CD4-positive, alpha-beta memory T cell (primary cell): ENCODE measurements at regions of chr16 and their contacts with region 1.

Region 1: DNA sequence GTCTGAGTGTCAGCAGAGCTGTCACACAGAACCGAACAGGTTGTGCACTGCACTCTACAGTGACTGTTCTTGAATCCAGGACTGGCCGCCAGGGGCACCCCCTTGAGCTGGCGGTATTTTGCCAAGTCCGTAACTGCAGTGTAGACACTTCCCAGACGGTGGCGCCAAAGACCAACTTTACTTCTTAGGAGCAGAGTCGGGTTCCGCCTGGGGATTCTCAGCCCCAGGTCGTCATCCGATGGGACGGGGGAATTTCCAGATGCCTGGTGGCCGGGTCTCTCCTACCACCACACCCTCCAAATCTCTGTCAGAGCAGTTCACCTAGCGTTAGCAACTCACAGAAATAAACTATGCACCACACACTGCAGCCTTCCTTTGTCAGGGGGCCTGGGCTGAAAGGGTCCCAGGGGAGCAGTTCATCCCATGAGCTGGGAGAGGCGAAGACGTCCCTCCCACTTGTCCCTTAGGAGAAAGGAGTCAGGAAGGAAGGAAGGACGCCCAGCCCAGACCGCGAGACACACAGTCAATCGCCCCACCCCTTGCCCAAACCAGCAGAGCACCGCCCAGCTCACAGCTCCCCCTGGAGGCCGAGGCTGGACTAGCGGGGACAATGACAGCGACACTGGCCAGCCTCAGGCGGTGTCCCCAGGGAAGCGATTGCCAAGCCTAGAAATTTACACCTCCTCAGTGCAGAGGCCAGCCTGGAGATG is 7.4 kb upstream of the RIPOR1 start:
- DNase-seq: peak; percentile 93 to 98 (median 94)
- H3K4me3 ChIP-seq: peak overlapping the region; percentile 72 to 98
- H3K4me3 Mint-ChIP-seq: peak overlapping the region; percentile 89 to 95 (median 91)
- H3K27ac ChIP-seq: peak overlapping the region; percentile 92
- H3K27ac Mint-ChIP-seq: peak overlapping the region; percentile 98 to 100 (median 99)
- H3K4me1 ChIP-seq: peaks cover 5% of the 10 kb centered on the region
- H3K4me1 Mint-ChIP-seq: peaks cover 9 to 26% (median 12%) of the 10 kb centered on the region in 4 donors
- H3K27me3 ChIP-seq: no peaks in the 10 kb centered on the region
- H3K27me3 Mint-ChIP-seq: no peaks in the 10 kb centered on the region

Region 2: DNA sequence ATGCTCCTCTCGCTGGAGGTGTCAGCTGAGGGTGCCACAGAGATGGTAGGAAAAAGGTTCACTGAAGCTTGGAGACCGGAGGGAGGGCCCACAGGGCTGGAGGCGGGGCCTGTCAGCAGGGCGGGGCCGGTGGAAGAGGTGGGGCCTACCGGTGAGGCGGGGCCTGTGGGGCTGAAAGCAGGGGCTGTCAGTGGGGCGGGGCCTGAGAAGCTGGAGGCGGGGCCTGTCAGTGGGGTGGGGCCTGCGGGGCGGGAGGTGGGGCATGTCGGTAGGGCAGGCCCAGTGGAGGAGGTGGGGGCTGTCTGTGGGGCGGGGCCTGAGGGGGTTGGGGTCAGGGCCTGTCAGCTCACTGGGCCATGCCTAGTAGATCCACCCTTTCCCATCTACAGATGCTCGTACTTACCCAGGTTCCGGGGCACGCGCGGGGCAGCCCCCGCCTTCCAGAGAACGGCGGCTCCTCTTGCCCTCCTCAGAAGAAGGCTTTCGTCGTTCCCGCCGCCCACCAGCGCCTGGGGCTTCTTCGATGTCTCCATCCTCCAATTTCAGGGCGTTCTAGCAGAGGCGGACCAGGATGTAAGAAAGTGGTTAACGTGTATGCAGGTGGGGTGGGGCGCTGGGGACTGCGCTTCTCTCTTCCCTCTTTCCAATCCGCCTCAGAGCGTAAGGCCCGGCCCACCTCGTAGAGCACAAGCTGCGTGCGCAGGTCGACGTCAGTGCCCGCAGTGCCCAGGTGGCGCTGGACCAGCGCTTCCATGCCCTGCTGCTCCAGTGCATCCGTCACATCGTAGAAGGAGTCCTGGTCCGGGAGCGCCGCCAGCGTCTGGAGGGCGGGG is 284.5 kb before region 1 on chr16:
- CTCF ChIA-PET with region 1: no interaction called
- POLR2A ChIA-PET with region 1: no interaction called
- intact Hi-C with region 1: no loop called
- DNase-seq: peak; percentile 83 to 87 (median 84)
- H3K4me3 ChIP-seq: peak overlapping the region; percentile 17
- H3K4me3 Mint-ChIP-seq: peak overlapping the region; percentile 71 to 88 (median 81)
- H3K27ac ChIP-seq: peak overlapping the region; percentile 56
- H3K27ac Mint-ChIP-seq: peak overlapping the region; percentile 92 to 99 (median 97)
- H3K4me1 ChIP-seq: peaks cover 13% of the 10 kb centered on the region
- H3K4me1 Mint-ChIP-seq: peaks cover 8 to 26% (median 14%) of the 10 kb centered on the region in 4 donors
- H3K27me3 ChIP-seq: no peaks in the 10 kb centered on the region
- H3K27me3 Mint-ChIP-seq: no peaks in the 10 kb centered on the region

Region 3: GRCh38 chr16:67537270-67537635 is 16.0 kb after region 1 on chr16:
- CTCF ChIA-PET with region 1: interaction called, 125 read pairs
- POLR2A ChIA-PET with region 1: interaction called, 35 read pairs
- intact Hi-C with region 1: loop called (anchors 2 kb)
- DNase-seq: peak in 3 of 5 donors; percentile 37 to 66 (median 38)
- H3K4me3 ChIP-seq: peak overlapping the region; percentile 42 to 72
- H3K4me3 Mint-ChIP-seq: peak overlapping the region; percentile 81 to 92 (median 86)
- H3K27ac ChIP-seq: peak overlapping the region; percentile 84
- H3K27ac Mint-ChIP-seq: peak overlapping the region; percentile 90 to 93 (median 92)
- H3K4me1 ChIP-seq: peaks cover 26% of the 10 kb centered on the region
- H3K4me1 Mint-ChIP-seq: peaks cover 18 to 60% (median 34%) of the 10 kb centered on the region in 4 donors
- H3K27me3 ChIP-seq: no peaks in the 10 kb centered on the region
- H3K27me3 Mint-ChIP-seq: no peaks in the 10 kb centered on the region

Region 4: DNA sequence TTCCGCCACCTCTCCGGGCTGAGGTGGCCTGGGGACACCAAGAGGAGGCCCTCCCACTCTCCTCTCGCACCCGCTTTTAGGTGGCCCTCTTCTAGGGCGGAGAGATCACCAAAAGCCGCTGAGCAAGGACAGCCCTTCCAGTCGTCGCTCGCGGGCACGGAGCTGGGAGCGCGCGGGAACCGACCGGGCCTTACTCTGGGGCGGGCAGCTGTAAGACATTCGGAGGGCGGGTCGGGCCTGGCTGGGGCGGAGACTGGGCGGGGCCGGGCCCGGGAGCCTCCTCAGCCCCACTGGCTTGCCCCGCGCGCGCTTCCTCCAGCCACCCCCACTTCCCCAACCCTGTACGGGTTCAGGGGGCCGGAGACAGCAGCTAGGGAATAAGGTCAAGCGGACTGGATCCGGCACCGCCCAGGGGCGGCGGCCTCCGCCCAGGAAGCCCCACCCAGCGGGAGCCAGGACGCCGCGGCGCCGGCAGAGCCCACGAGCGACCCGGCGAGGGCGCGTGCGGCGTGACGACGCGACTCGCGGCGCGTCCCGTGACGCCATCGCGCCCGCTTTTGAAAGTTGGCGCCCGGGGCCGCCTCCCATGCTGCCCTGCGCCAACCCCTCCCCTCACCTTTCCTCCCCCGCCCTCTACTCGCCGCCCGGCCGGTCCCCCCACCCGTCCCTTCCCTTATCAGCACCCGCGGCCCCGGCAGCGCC is 40.7 kb after region 1 on chr16:
- CTCF ChIA-PET with region 1: interaction called, 26 read pairs
- POLR2A ChIA-PET with region 1: interaction called, 19 read pairs
- intact Hi-C with region 1: loop called (anchors 2 kb)
- DNase-seq: peak; percentile 96 to 98 (median 97)
- H3K4me3 ChIP-seq: peak overlapping the region; percentile 61 to 78
- H3K4me3 Mint-ChIP-seq: peak overlapping the region; percentile 89 to 97 (median 91)
- H3K27ac ChIP-seq: peak overlapping the region; percentile 73
- H3K27ac Mint-ChIP-seq: peak overlapping the region; percentile 92 to 97 (median 96)
- H3K4me1 ChIP-seq: peaks cover 52% of the 10 kb centered on the region
- H3K4me1 Mint-ChIP-seq: peaks cover 23 to 53% (median 37%) of the 10 kb centered on the region in 4 donors
- H3K27me3 ChIP-seq: no peaks in the 10 kb centered on the region
- H3K27me3 Mint-ChIP-seq: no peaks in the 10 kb centered on the region

Region 5: DNA sequence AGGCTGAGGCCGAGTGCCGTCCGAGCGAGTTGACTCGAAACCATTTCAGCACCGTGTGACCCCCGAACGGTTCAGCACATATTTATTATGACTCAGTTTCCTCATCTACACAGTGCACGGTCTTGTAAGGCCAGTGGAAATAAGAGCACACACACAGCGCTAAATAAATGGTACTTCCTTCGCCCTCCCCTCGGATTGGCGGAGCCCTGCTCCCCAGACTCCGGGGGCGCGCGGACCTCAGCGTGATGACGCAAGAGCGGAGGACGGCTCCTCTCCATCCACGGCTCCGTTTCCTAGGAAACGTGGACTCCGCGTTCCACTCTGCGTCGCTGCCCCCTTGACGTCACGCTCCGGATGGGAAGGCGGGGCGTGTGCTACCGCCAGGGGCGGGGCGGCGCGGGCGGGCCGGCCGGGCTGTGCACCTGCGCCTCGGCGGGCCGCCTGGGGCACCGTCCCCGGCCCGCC is 139.3 kb after region 1 on chr16 and contains the start of gene PARD6A:
- CTCF ChIA-PET with region 1: interaction called, 143 read pairs
- POLR2A ChIA-PET with region 1: interaction called, 15 read pairs
- intact Hi-C with region 1: no loop called
- DNase-seq: peak; percentile 94 to 97 (median 96)
- H3K4me3 ChIP-seq: peak within 1 kb of the TSS; percentile 98 to 100
- H3K4me3 Mint-ChIP-seq: peak within 1 kb of the TSS; percentile 93 to 98 (median 95)
- H3K27ac ChIP-seq: peak within 1 kb of the TSS; percentile 98
- H3K27ac Mint-ChIP-seq: peak within 1 kb of the TSS; percentile 97 to 99 (median 98)
- H3K4me1 ChIP-seq: peaks cover 27% of the 10 kb centered on the region
- H3K4me1 Mint-ChIP-seq: peaks cover 10 to 48% (median 20%) of the 10 kb centered on the region in 4 donors
- H3K27me3 ChIP-seq: no peaks in the 10 kb centered on the region
- H3K27me3 Mint-ChIP-seq: no peaks in the 10 kb centered on the region
- total RNA-seq, gene PARD6A: 7.4 to 8.8 TPM

Region 6: DNA sequence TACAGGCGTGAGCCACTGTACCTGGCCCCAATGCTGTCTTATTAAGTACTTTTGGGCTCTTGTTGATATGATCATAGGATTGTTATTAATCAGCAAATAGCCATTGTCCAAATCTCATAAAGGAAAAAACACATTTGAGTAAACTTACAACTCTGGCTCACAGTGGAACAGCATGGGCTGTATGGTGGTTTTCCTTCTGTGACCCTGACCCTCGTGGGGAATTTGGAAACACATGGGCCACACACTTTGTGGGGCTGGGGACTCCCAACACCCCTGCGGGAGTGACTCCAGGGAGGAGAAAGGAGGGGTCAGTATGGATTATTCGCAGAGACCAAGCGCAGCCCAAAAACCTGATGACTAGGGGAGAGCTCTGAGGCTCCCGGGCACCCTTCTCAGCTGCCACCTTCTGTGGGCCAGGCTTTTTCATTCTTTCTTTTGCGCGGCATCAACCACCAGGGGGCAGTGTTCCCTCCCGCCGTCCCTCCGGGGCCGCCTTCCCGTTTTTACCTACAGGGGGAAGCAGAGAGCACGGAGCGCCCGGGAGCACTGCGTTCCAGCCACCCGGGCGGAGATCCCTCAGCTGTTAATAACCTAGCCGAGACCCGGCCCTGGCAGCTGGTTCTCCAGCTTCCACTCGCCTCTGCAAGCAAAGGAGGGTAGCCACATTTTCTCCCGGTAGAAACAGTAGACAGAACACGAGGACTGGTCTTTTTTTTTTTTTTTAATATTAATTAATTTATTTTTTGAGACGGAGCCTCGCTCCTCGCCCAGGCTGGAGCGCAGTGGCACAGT is 295.2 kb after region 1 on chr16:
- CTCF ChIA-PET with region 1: interaction called, 13 read pairs
- POLR2A ChIA-PET with region 1: no interaction called
- intact Hi-C with region 1: loop called (anchors 2 kb)
- DNase-seq: peak; percentile 83 to 92 (median 85)
- H3K4me3 ChIP-seq: no peak overlapping the region
- H3K4me3 Mint-ChIP-seq: peak overlapping the region in 1 of 8 donors; percentile 61
- H3K27ac ChIP-seq: no peak overlapping the region
- H3K27ac Mint-ChIP-seq: peak overlapping the region in 4 of 7 donors; percentile 75 to 92 (median 82)
- H3K4me1 ChIP-seq: no peaks in the 10 kb centered on the region
- H3K4me1 Mint-ChIP-seq: peaks cover 0 to 8% (median 5%) of the 10 kb centered on the region in 4 donors
- H3K27me3 ChIP-seq: no peaks in the 10 kb centered on the region
- H3K27me3 Mint-ChIP-seq: no peaks in the 10 kb centered on the region